ENCODE measurements at regions of chr1 and their contacts with region 1.

Region 1: GRCh38 chr1:26978901-26979300 is 14.6 kb upstream of the TRNP1 start:
- DNase-seq: no peak
- ATAC-seq: no peak
- H3K4me3 ChIP-seq: no peak overlapping the region
- H3K27ac ChIP-seq: no peak overlapping the region
- H3K4me1 ChIP-seq: no peaks in the 10 kb centered on the region
- H3K27me3 ChIP-seq: peaks cover 0 to 15% (median 6%) of the 10 kb centered on the region in 7 donors
- CTCF ChIP-seq: no peak

Region 2: DNA sequence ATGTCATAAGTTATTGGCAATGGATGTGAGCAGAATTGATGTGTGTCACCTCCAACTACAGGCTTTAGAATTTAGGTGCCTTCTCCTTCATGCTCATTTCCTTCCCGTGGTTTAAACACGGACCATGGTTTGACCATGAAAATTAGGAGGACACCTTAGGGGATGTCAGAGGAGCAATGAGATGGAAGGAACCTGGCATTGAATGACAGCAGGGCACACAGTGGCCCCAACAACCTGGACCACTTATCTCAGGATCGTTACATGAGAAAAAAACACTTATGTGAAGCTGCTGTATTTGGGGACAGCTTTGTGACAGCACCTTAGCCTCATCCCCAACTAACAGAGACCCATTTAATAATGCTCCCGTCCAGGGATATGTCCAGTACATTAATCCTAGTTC is 105.2 kb after region 1 on chr1:
- intact Hi-C with region 1: loop called in 1 of 10 experiments (anchors 5 kb)
- DNase-seq: no peak
- ATAC-seq: no peak
- H3K4me3 ChIP-seq: no peak overlapping the region
- H3K27ac ChIP-seq: no peak overlapping the region
- H3K4me1 ChIP-seq: no peaks in the 10 kb centered on the region
- H3K27me3 ChIP-seq: peaks cover 0 to 5% (median 0%) of the 10 kb centered on the region in 7 donors
- CTCF ChIP-seq: no peak

Measured in heart right ventricle (tissue), 16 donors.